ENCODE measurements at regions of chr4 and their contacts with region 1.

Region 1: GRCh38 chr4:3880615-3881120 is 114.5 kb downstream of the ADRA2C start:
- DNase-seq: peak; percentile 82
- ATAC-seq: peak; percentile 96
- H3K4me3 Mint-ChIP-seq: no peak overlapping the region
- H3K27ac Mint-ChIP-seq: no peak overlapping the region
- H3K4me1 Mint-ChIP-seq: peaks cover 14% of the 10 kb centered on the region
- H3K27me3 Mint-ChIP-seq: peaks cover 32% of the 10 kb centered on the region
- CTCF ChIP-seq: peak; percentile 62

Region 2: GRCh38 chr4:3747581-3747904 is 133.1 kb before region 1 on chr4:
- CTCF ChIA-PET with region 1: interaction called, 13 read pairs
- POLR2A ChIA-PET with region 1: no interaction called
- intact Hi-C with region 1: no loop called
- DNase-seq: peak; percentile 20
- ATAC-seq: no peak
- H3K4me3 Mint-ChIP-seq: no peak overlapping the region
- H3K27ac Mint-ChIP-seq: no peak overlapping the region
- H3K4me1 Mint-ChIP-seq: no peaks in the 10 kb centered on the region
- H3K27me3 Mint-ChIP-seq: peaks cover 34% of the 10 kb centered on the region
- CTCF ChIP-seq: peak; percentile 41

Region 3: DNA sequence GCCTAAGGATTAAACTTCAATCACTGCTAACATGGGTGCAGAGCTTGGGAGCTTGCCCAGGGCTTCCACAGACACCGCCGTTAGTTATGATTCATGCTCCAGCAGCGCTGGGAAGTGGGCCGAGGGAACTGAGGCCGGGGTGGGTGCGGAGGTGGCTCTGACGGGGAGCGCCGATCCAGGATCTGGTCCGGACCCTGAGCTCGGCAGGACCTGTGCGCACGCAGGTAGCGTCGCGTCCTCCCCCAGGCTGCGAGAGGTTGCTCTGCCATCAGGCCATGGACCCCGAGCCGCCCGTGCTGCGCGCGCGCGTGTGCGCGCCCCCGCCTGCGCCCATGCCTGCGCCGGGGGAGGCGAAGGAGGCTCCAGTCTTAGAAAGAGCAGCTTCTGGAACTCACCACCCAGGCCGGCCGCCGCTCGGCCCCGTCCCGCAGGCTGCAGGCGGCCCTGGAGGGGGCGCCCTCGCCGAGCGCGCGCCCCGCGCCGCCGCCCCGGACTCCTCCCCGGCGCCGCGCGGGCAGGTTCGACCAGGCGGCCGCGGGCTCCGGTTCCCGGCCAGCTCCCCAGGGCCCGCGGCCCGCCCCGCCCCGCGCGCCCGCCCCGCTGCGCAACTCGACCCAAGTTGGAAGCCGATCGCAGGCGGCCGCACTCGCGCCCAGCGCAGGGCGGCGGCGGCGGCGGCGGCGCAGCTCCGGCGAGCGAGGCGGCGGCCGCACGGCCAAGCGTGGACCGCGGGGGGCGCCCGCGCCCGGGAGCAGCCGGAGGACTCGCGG is 115.2 kb before region 1 on chr4:
- CTCF ChIA-PET with region 1: interaction called, 9 read pairs
- POLR2A ChIA-PET with region 1: no interaction called
- intact Hi-C with region 1: loop called (anchors 5 kb)
- DNase-seq: peak; percentile 17
- ATAC-seq: peak; percentile 60
- H3K4me3 Mint-ChIP-seq: no peak overlapping the region
- H3K27ac Mint-ChIP-seq: no peak overlapping the region
- H3K4me1 Mint-ChIP-seq: peaks cover 9% of the 10 kb centered on the region
- H3K27me3 Mint-ChIP-seq: peaks cover 19% of the 10 kb centered on the region
- CTCF ChIP-seq: no peak